Calu3 (cell line): ENCODE measurements at regions of chr16 and their contacts with region 1.

Region 1: DNA sequence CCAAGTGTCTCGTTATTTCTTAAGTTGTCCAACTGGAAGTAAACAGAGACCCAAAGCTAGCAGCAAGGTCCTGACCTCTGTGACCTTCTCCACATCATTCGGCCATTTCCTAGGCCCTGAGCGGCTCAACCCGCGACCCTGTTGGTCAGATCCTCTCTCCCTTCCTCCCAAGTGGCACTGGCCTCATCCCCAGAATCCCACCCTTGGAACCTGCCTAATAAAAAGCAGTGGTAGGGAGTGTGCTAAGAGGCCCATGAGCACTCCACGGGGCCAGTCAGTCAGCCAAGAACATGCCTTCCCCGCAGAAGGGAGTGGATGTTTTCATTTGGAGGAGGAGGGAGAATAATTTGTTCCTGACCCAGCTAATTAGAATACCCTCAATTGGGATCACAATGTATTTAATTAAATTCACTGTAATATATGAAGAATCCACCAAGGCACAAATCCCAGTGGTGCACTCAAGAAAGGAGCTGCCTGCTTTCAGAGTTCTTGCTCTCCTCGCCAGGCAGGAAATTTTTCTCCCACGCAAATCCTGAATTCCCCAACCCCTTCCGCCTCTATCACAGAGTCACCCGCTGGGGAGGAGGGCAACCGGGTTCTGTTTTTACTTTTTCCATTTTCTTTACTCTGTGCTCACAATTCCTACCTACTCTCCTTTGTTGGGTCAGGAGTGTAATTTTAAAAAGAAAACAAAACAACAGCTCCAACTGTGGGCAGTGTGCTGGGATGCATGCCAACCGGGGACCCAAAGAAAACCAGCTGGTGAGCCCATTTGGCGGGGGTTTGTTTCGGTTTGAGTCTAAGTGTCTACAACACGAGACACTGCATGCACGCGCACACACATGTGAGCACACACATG is 153.4 kb downstream of the ZFHX3 start:
- DNase-seq: no peak
- H3K4me3 Mint-ChIP-seq: no peak overlapping the region
- H3K27ac Mint-ChIP-seq: no peak overlapping the region
- H3K4me1 Mint-ChIP-seq: peaks cover 13% of the 10 kb centered on the region
- H3K27me3 Mint-ChIP-seq: no peaks in the 10 kb centered on the region
- CTCF ChIP-seq: no peak

Region 2: GRCh38 chr16:72800524-72801161 is 93.9 kb before region 1 on chr16:
- CTCF ChIA-PET with region 1: no interaction called
- intact Hi-C with region 1: no loop called
- DNase-seq: no peak
- H3K4me3 Mint-ChIP-seq: no peak overlapping the region
- H3K27ac Mint-ChIP-seq: no peak overlapping the region
- H3K4me1 Mint-ChIP-seq: no peaks in the 10 kb centered on the region
- H3K27me3 Mint-ChIP-seq: no peaks in the 10 kb centered on the region
- CTCF ChIP-seq: no peak

Region 3: GRCh38 chr16:73143576-73144422 is 249.3 kb after region 1 on chr16:
- CTCF ChIA-PET with region 1: no interaction called
- intact Hi-C with region 1: no loop called
- DNase-seq: no peak
- H3K4me3 Mint-ChIP-seq: peak overlapping the region; percentile 32
- H3K27ac Mint-ChIP-seq: no peak overlapping the region
- H3K4me1 Mint-ChIP-seq: peaks cover 10% of the 10 kb centered on the region
- H3K27me3 Mint-ChIP-seq: peaks cover 68% of the 10 kb centered on the region
- CTCF ChIP-seq: no peak

Region 4: GRCh38 chr16:73317321-73317857 is 422.9 kb after region 1 on chr16:
- CTCF ChIA-PET with region 1: interaction called, 10 read pairs
- intact Hi-C with region 1: no loop called
- DNase-seq: no peak
- H3K4me3 Mint-ChIP-seq: no peak overlapping the region
- H3K27ac Mint-ChIP-seq: no peak overlapping the region
- H3K4me1 Mint-ChIP-seq: no peaks in the 10 kb centered on the region
- H3K27me3 Mint-ChIP-seq: peaks cover 97% of the 10 kb centered on the region
- CTCF ChIP-seq: no peak